Activated T-helper 1 cell treated with anti-CD3 and anti-CD28 coated beads, Interleukin-12 subunit alpha, Interleukin-12 subunit beta, Interleukin-2, Interleukin-4 antibody, amounts not matched to agents 30 ng/mL and 10 ng/mL and 1 ng/mL, durations not matched to agents 14 hours and 24 hours and 36 hours (primary cell): ENCODE measurements at regions of chr7 and their contacts with region 1.

Region 1: DNA sequence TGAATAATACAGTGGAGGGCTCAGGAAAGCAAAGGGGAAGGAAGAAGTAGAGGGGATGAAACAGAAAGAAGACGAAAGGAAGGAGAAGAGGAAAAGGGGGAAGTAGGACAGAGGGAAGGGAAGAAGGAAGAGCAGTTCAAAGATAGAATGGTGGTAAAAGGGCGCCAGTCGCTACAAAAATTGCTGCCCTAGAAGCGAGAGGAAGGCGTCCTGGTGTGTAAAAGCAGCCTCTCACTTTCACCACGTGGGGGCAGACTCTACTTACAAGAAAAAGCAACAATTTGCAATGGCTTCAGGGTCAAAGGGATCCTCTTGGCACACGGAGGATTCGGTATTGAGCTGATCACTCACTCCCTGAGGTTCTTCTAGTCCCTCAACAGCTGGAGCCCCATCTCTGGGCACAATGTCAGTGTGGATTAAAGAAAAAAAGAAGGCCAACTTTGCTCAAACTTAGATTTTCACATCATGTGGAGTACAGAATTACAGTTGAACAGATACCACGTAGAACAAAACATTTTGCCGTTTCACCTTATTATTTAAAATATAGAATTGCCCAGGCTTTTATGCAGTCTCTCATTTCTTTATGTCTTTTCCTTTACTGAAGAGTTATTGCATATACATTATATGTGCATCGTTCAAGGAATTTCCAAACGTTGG is 31.4 kb upstream of the NPVF start:
- DNase-seq: peak; percentile 40
- H3K4me3 Mint-ChIP-seq: no peak overlapping the region
- H3K27ac Mint-ChIP-seq: no peak overlapping the region
- H3K4me1 Mint-ChIP-seq: peaks cover 27% of the 10 kb centered on the region
- H3K27me3 Mint-ChIP-seq: peaks cover 4% of the 10 kb centered on the region

Region 2: GRCh38 chr7:25389489-25390106 is 129.9 kb after region 1 on chr7:
- intact Hi-C with region 1: loop called (anchors 1 kb)
- DNase-seq: no peak
- H3K4me3 Mint-ChIP-seq: no peak overlapping the region
- H3K27ac Mint-ChIP-seq: no peak overlapping the region
- H3K4me1 Mint-ChIP-seq: no peaks in the 10 kb centered on the region
- H3K27me3 Mint-ChIP-seq: peaks cover 20% of the 10 kb centered on the region